ENCODE measurements at regions of chr3 and their contacts with region 1.

Region 1: GRCh38 chr3:15291589-15292541 is 40.5 kb downstream of the SH3BP5 start:
- DNase-seq: peak; percentile 74
- H3K4me3 Mint-ChIP-seq: peak overlapping the region; percentile 63
- H3K27ac Mint-ChIP-seq: peak overlapping the region; percentile 78
- H3K4me1 Mint-ChIP-seq: peaks cover 89% of the 10 kb centered on the region
- H3K27me3 Mint-ChIP-seq: no peaks in the 10 kb centered on the region

Region 2: GRCh38 chr3:15279671-15280408 is 12.0 kb before region 1 on chr3:
- intact Hi-C with region 1: loop called (anchors 1 kb)
- DNase-seq: no peak
- H3K4me3 Mint-ChIP-seq: no peak overlapping the region
- H3K27ac Mint-ChIP-seq: peak overlapping the region; percentile 52
- H3K4me1 Mint-ChIP-seq: peaks cover 83% of the 10 kb centered on the region
- H3K27me3 Mint-ChIP-seq: no peaks in the 10 kb centered on the region

Region 3: DNA sequence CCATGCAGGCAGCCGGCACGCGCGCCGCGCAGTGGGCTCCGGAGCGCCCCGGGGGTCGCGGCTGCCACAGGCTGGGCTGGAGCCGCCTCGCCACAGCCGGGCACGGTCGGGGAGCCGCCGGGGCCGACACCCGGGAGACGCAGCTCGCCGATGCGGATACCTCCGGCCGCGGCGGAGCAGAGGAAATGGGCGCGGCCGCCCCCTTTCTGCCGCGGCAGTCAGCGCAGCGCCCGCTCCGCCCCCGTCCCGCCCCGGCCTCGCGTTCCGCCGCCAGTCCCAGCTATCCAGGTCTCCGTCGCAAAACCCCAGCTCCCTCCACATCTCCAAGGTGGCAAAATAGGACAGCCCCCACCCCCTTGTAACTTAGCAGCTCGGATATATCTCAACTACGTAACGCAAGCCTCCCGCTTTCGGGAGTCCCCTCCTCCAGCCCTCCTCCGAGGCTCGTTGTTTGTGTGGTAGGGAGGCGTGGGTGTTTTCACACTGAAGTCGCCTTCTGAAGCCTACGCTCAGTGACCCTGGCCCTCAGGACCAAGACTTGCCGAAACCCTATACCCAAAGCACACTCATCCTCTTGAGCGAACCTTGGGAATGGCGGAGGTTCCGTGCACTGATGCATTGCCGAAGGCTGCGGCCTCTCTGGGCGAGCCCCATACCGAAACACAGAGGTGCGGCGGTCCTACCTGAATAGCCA is 40.7 kb after region 1 on chr3 and contains the start of gene SH3BP5:
- intact Hi-C with region 1: loop called (anchors 1 kb)
- DNase-seq: peak; percentile 73
- H3K4me3 Mint-ChIP-seq: peak within 1 kb of the TSS; percentile 94
- H3K27ac Mint-ChIP-seq: peak within 1 kb of the TSS; percentile 89
- H3K4me1 Mint-ChIP-seq: peaks cover 72% of the 10 kb centered on the region
- H3K27me3 Mint-ChIP-seq: no peaks in the 10 kb centered on the region
- total RNA-seq, gene SH3BP5: 28.0 and 30.3 TPM in 2 replicates

Measured in activated T-helper 1 cell treated with anti-CD3 and anti-CD28 coated beads, Interleukin-12 subunit alpha, Interleukin-12 subunit beta, Interleukin-2, Interleukin-4 antibody, amounts not matched to agents 30 ng/mL and 10 ng/mL and 1 ng/mL, durations not matched to agents 14 hours and 24 hours and 36 hours (primary cell).